Lower leg skin (tissue), 4 donors: ENCODE measurements at regions of chr3 and their contacts with region 1.

Region 1: GRCh38 chr3:184543843-184544512 is 17.6 kb upstream of the EPHB3 start:
- DNase-seq: peak; percentile 85 to 94
- H3K4me3 ChIP-seq: no peak overlapping the region
- CTCF ChIP-seq: peak in 1 of 3 donors; percentile 78
- POLR2A ChIP-seq: no peak

Region 2: DNA sequence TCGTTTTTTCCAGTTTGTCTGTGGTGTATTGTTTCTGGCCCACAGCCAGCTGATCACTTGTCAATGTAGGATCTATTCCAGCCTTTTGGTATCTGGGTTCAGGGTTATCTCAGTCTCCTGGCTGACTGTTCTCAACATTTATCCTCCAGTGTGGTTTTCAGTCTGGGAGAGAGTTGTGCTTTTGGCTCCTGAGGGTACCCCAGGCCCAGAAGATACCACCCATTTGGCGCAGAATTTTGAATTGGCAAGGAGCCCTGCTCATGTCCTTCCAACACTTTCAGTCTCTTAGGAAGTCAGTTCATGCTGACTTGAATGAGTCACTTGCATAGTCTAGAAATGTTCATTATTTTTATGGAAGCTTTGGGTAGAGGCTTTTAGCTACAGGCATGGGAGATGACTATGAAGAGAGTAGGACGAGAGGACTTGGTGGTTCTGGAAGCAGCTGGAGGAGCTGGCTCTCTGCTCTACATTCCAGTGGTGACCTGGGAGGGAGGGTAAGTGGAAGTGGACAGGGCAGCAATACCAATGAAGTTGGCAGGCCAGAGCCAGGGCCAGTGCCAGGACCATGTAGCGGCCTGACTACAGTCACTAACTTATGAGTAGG is 175.3 kb before region 1 on chr3:
- intact Hi-C with region 1: loop called (anchors 2 kb)
- DNase-seq: no peak
- H3K4me3 ChIP-seq: no peak overlapping the region
- CTCF ChIP-seq: no peak
- POLR2A ChIP-seq: no peak

Region 3: GRCh38 chr3:184417619-184418327 is 126.2 kb before region 1 on chr3:
- intact Hi-C with region 1: loop called (anchors 5 kb)
- DNase-seq: peak; percentile 67 to 96
- H3K4me3 ChIP-seq: no peak overlapping the region
- CTCF ChIP-seq: peak in 1 of 3 donors; percentile 91
- POLR2A ChIP-seq: no peak